K562 (cell line): ENCODE measurements at regions of chr7 and their contacts with region 1.

Region 1: DNA sequence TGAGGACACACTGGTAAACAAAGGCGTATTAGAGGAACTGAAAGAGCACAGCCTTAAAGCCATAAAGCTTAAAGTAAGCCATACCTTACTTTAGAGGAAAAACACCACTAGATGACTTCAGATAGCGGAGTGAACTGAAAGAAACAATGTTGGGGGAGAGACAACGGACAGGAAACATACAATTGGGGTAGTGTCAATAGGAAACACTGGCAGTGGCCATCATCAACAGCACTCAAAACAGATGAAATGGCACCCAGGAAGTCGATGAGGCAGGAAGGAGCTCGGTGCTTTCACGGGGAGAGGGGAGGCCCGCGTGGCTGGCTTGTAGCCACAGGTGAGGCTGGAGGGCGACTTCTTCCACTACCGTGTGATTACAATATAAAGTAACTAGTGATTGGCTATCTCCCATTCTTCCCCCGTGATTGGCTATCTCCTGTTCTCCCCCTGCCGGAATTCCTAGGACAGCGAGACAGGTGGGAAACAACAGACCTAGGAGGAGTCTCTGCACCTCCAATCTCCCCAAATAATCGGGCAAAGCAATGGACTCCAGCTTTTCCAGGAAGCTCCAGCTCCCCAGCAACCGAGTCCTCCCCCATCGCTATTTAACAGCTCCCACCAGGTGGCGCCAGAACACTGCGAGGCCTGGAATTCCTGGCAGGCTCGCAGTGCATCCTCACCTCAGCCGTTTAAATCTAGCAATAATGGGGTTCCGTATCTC is 2.4 kb upstream of the TAS2R38 start:
- DNase-seq: peak; percentile 76 to 80 (median 78)
- ATAC-seq: peak; percentile 99
- H3K4me3 ChIP-seq: no peak overlapping the region
- H3K27ac ChIP-seq: no peak overlapping the region
- H3K4me1 ChIP-seq: no peaks in the 10 kb centered on the region
- H3K27me3 ChIP-seq: no peaks in the 10 kb centered on the region
- CTCF ChIP-seq: peak; percentile 82 to 92 (median 88)
- EP300 ChIP-seq: no peak
- POLR2A ChIP-seq: no peak
- RAD21 ChIP-seq: peak; percentile 49 to 78

Region 2: DNA sequence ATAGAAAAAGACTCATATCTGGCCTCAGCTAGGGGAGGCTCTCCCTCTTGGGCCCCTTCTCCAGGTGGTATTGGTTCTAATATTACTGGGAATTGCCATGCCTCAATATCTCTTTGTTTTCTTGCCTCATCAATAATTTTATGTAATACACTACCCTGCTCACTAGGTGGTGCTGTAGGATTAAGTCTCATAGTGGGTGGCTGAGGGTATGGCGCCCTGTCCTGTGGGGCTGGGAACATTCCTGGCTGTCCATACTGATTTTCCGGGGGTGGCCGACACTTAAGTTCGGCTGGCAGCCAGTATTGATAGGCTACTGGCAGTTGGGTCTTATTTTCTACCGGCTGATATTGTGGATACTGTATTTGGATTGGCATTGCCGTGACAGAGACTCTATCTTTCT is 221.0 kb before region 1 on chr7:
- CTCF ChIA-PET with region 1: no interaction called
- POLR2A ChIA-PET with region 1: no interaction called
- in situ Hi-C with region 1: no loop called
- intact Hi-C with region 1: loop called (anchors 10 kb)
- DNase-seq: peak; percentile 55 to 71 (median 62)
- ATAC-seq: peak; percentile 88
- H3K4me3 ChIP-seq: no peak overlapping the region
- H3K27ac ChIP-seq: no peak overlapping the region
- H3K4me1 ChIP-seq: no peaks in the 10 kb centered on the region
- H3K27me3 ChIP-seq: no peaks in the 10 kb centered on the region
- CTCF ChIP-seq: peak; percentile 73 to 90 (median 77)
- EP300 ChIP-seq: no peak
- POLR2A ChIP-seq: no peak
- RAD21 ChIP-seq: peak in 1 of 2 experiments; percentile 37; a peak in 1 of 4 replicates

Region 3: DNA sequence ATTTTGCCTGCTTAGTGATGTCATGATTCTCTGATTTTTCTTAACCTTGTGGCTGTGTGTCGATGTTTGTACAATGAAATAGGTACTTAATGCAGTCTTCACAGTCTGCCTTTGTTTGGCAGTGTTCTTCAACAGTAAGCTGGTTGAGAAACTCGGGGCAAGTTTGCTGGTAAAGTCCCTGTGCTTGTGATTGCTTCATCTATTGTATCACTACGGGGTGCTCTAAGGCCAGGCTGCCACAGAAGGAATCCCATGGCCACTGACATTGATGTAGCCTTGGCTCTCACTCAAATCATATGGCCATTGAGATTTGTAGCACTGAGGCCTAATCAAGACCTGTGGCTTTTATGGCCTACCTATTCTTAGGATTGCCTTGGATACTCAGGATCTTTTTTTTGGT is 101.2 kb before region 1 on chr7:
- CTCF ChIA-PET with region 1: no interaction called
- POLR2A ChIA-PET with region 1: no interaction called
- in situ Hi-C with region 1: no loop called
- intact Hi-C with region 1: no loop called
- DNase-seq: no peak
- ATAC-seq: no peak
- H3K4me3 ChIP-seq: no peak overlapping the region
- H3K27ac ChIP-seq: no peak overlapping the region
- H3K4me1 ChIP-seq: no peaks in the 10 kb centered on the region
- H3K27me3 ChIP-seq: no peaks in the 10 kb centered on the region
- CTCF ChIP-seq: no peak
- EP300 ChIP-seq: no peak
- POLR2A ChIP-seq: no peak
- RAD21 ChIP-seq: no peak

Region 4: DNA sequence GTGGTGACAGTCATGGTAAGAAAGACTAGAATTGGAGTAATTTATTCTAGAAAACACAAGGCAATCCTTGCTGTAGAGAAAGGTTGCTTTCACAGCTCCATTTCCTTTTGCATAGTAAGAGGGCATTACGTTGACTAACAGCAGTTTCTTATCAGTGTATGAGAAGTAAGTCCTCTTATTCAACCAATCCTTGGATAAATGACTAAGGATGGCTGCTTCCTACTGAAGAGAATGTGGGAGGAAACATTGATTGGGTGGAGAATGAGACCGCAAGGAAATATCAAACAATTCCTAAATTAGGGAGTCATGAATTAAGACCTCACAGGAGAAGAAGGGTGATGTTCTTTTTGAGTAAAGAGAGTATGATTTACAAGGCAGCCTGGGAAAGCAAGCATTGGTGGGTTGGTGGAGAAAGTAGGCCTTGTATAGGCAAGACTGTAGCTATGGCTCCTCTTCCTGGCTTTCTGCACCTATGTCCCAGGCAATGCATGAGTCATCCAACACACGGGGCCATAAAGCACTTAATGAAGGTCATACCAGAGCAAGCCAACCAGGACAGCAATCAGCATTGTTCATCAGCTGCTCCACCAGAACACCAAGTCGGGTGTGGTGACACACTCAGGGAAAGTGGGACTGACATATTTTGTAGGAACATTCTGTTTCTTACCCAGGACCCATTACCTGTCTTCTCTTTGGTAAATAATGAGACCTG is 25.4 kb after region 1 on chr7:
- CTCF ChIA-PET with region 1: no interaction called
- POLR2A ChIA-PET with region 1: no interaction called
- in situ Hi-C with region 1: no loop called
- intact Hi-C with region 1: no loop called
- DNase-seq: no peak
- ATAC-seq: no peak
- H3K4me3 ChIP-seq: no peak overlapping the region
- H3K27ac ChIP-seq: no peak overlapping the region
- H3K4me1 ChIP-seq: no peaks in the 10 kb centered on the region
- H3K27me3 ChIP-seq: no peaks in the 10 kb centered on the region
- CTCF ChIP-seq: no peak
- EP300 ChIP-seq: no peak
- POLR2A ChIP-seq: no peak
- RAD21 ChIP-seq: no peak

Region 5: GRCh38 chr7:142188846-142189245 is 212.9 kb after region 1 on chr7:
- CTCF ChIA-PET with region 1: no interaction called
- POLR2A ChIA-PET with region 1: no interaction called
- in situ Hi-C with region 1: no loop called
- intact Hi-C with region 1: loop called (anchors 1 kb)
- DNase-seq: no peak
- ATAC-seq: no peak
- H3K4me3 ChIP-seq: no peak overlapping the region
- H3K27ac ChIP-seq: no peak overlapping the region
- H3K4me1 ChIP-seq: no peaks in the 10 kb centered on the region
- H3K27me3 ChIP-seq: no peaks in the 10 kb centered on the region
- CTCF ChIP-seq: peak in 1 of 3 experiments; percentile 23; a peak in 1 of 6 replicates
- EP300 ChIP-seq: no peak
- POLR2A ChIP-seq: no peak
- RAD21 ChIP-seq: peak; percentile 31 to 41; a peak in 2 of 4 replicates

Region 6: DNA sequence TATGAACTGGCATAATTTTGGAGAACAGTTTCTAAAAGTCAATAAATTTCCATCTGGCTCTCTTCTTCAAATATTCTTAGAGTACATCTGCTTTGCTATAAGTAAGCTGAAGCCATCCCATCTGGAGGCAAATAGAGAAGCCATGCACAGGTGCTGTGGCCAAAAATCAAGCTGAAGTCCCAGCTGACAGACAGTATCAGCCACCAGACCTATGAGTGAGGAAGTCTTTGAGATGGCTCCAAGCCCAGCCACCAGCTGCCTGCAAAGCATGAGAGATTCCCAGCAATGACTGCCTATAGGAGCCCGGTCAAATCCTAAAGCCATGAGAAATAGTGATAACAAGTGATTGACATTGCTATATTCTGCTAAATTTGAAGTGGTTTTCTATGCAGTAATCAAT is 303.6 kb after region 1 on chr7:
- CTCF ChIA-PET with region 1: no interaction called
- POLR2A ChIA-PET with region 1: no interaction called
- in situ Hi-C with region 1: no loop called
- intact Hi-C with region 1: loop called (anchors 10 kb)
- DNase-seq: no peak
- ATAC-seq: no peak
- H3K4me3 ChIP-seq: no peak overlapping the region
- H3K27ac ChIP-seq: no peak overlapping the region
- H3K4me1 ChIP-seq: no peaks in the 10 kb centered on the region
- H3K27me3 ChIP-seq: no peaks in the 10 kb centered on the region
- CTCF ChIP-seq: no peak
- EP300 ChIP-seq: no peak
- POLR2A ChIP-seq: no peak
- RAD21 ChIP-seq: no peak

Region 7: GRCh38 chr7:142301923-142302550 is 326.1 kb after region 1 on chr7:
- CTCF ChIA-PET with region 1: interaction called, 5 read pairs
- POLR2A ChIA-PET with region 1: no interaction called
- in situ Hi-C with region 1: no loop called
- intact Hi-C with region 1: loop called (anchors 1 kb)
- DNase-seq: peak in 3 of 4 experiments; percentile 12 to 42 (median 40)
- ATAC-seq: peak; percentile 58; the same call in 2 of the 3 replicates
- H3K4me3 ChIP-seq: no peak overlapping the region
- H3K27ac ChIP-seq: no peak overlapping the region
- H3K4me1 ChIP-seq: no peaks in the 10 kb centered on the region
- H3K27me3 ChIP-seq: no peaks in the 10 kb centered on the region
- CTCF ChIP-seq: peak; percentile 42 to 57 (median 53)
- EP300 ChIP-seq: no peak
- POLR2A ChIP-seq: no peak
- RAD21 ChIP-seq: peak in 1 of 2 experiments; percentile 34; a peak in 2 of 4 replicates